Calu3 (cell line): ENCODE measurements at regions of chr3 and their contacts with region 1.

Region 1: DNA sequence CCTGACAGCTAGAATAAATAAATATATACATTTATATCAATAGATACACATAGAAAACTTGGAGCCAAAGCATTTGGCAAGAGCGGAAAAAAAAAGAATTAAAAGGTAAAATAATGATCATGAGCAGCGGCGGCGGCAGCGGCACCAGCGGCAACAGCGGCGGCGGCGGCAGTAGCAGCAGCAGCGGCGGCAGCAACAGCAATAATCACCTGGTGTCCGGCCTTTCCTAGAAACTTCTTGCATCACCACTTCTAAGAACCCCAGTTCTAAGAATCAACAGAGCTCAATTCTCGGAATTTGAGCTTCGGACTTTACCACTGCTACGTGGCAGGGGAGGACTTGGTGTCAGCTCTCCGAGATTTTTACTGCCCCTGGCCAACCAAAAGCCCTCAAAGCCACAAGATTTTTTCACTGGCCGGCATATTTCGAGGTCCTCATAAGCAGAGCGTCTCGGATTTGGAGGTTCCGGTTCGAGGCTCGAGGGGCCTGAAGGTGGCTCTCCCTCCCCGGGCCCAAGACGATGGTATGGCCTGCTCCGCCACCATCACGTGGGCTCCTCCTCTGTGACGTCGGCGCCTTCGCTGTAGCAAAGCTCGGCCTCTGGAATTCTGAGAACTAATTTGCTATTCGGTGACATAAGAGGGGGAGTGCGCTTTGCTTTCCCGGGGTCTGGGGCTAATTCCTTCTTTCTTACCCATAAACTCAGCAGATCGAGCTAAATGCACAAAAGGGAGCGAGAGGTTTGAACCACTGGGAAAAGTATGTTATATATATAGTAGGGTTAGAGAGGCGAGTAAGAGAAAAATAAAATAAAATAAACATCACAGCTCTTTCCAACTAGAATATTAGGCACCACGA is at the start of gene BCL6:
- DNase-seq: peak; percentile 93
- H3K4me3 Mint-ChIP-seq: peak within 1 kb of the TSS; percentile 83
- H3K27ac Mint-ChIP-seq: peak within 1 kb of the TSS; percentile 89
- H3K4me1 Mint-ChIP-seq: peaks cover 54% of the 10 kb centered on the region
- H3K27me3 Mint-ChIP-seq: no peaks in the 10 kb centered on the region
- CTCF ChIP-seq: no peak
- total RNA-seq, gene BCL6: 28.3 and 35.1 TPM in 2 replicates

Region 2: DNA sequence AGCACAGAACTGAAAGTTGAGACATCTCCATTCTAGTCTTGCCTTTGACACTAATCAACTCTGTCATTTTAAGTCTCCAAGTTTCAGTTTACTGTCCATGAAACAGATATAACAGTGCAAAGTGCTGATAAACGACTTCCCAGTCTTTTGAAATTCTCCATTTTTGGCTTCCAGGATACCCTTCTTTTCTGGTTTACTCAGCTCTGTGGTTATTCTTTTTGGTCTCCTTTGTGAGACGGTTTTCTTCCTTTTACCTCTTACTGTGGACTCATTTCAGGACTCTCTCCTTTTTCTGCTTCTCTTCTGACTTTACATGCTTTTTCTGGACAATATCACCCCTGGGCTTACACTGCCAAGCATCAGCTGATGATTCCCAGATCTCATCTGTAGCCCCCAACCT is 94.1 kb before region 1 on chr3:
- CTCF ChIA-PET with region 1: no interaction called
- intact Hi-C with region 1: no loop called
- DNase-seq: no peak
- H3K4me3 Mint-ChIP-seq: no peak overlapping the region
- H3K27ac Mint-ChIP-seq: no peak overlapping the region
- H3K4me1 Mint-ChIP-seq: no peaks in the 10 kb centered on the region
- H3K27me3 Mint-ChIP-seq: peaks cover 85% of the 10 kb centered on the region
- CTCF ChIP-seq: no peak

Region 3: DNA sequence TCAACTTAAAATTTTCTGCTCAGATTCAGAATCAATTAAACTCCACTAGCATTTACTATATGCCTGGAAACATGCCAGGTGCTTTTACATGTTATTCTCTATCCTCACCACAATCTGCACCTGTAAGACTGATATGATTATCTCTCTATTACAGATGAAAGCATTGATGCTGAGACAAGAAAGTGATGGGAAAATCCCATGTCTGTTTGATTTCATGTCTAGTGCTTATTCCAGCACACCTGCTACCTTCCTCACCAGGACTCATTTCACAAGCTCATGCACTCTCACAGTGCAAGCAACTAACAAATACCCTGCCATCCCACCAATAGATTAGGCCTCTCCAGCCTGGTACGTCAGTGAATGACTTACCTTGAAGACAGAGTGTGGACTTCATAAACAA is 24.8 kb after region 1 on chr3:
- CTCF ChIA-PET with region 1: no interaction called
- intact Hi-C with region 1: no loop called
- DNase-seq: no peak
- H3K4me3 Mint-ChIP-seq: no peak overlapping the region
- H3K27ac Mint-ChIP-seq: no peak overlapping the region
- H3K4me1 Mint-ChIP-seq: peaks cover 6% of the 10 kb centered on the region
- H3K27me3 Mint-ChIP-seq: no peaks in the 10 kb centered on the region
- CTCF ChIP-seq: no peak

Region 4: GRCh38 chr3:187974871-187975271 is 229.4 kb after region 1 on chr3:
- CTCF ChIA-PET with region 1: interaction called, 3 read pairs
- intact Hi-C with region 1: loop called (anchors 2 kb)
- DNase-seq: no peak
- H3K4me3 Mint-ChIP-seq: no peak overlapping the region
- H3K27ac Mint-ChIP-seq: no peak overlapping the region
- H3K4me1 Mint-ChIP-seq: peaks cover 44% of the 10 kb centered on the region
- H3K27me3 Mint-ChIP-seq: no peaks in the 10 kb centered on the region
- CTCF ChIP-seq: no peak

Region 5: DNA sequence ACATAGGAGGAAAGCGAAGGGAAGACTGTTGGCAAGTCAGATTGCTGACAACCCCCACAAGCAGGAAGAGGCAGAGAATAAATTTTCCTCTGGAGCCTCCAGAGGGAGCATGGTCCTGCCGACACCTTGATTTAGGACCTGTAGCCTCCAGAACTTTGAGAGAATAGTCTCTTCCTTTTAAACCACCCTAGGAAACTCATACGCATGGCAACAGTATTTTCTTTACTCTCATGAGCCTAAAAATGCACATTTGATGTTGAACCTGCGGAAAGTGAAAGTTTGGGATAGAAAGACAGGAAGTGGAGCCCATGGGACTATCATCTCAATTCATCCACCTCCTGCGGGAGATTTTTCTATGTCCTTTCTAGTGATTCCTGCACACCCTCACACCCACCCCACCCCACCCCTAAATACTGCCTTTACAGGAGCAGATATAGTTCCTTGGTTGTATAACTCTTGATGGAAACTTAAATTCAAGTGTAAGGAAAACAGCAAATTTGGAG is 291.8 kb after region 1 on chr3:
- CTCF ChIA-PET with region 1: interaction called, 3 read pairs
- intact Hi-C with region 1: loop called (anchors 10 kb)
- DNase-seq: peak; percentile 59
- H3K4me3 Mint-ChIP-seq: no peak overlapping the region
- H3K27ac Mint-ChIP-seq: no peak overlapping the region
- H3K4me1 Mint-ChIP-seq: peaks cover 29% of the 10 kb centered on the region
- H3K27me3 Mint-ChIP-seq: no peaks in the 10 kb centered on the region
- CTCF ChIP-seq: peak; percentile 65

Region 6: DNA sequence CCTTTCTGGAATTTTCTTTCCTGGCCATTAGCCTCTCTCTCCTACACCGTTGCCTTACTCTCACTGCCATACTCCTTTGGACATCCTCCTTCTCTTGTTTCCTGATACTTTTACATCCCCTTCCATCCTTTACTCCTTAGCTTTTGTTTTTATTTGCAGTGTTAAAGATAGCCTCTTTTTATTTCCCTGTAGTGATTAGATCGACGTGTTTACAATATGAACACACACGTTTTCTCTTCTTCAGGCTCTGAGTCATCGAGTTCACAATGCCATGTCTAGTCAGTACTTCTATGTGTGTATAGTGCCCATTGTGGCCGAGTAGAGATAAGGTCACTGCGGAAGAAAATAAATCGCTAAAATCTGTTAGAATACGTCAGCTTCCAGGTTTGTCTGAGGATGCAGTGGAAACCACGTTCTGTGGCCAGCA is 617.0 kb after region 1 on chr3:
- CTCF ChIA-PET with region 1: interaction called, 3 read pairs
- intact Hi-C with region 1: loop called (anchors 2 kb)
- DNase-seq: peak; percentile 66
- H3K4me3 Mint-ChIP-seq: peak overlapping the region; percentile 0
- H3K27ac Mint-ChIP-seq: peak overlapping the region; percentile 23
- H3K4me1 Mint-ChIP-seq: peaks cover 44% of the 10 kb centered on the region
- H3K27me3 Mint-ChIP-seq: no peaks in the 10 kb centered on the region
- CTCF ChIP-seq: no peak

Region 7: GRCh38 chr3:188568736-188569135 is 823.3 kb after region 1 on chr3:
- CTCF ChIA-PET with region 1: no interaction called
- intact Hi-C with region 1: loop called (anchors 10 kb)
- DNase-seq: no peak
- H3K4me3 Mint-ChIP-seq: no peak overlapping the region
- H3K27ac Mint-ChIP-seq: no peak overlapping the region
- H3K4me1 Mint-ChIP-seq: peaks cover 16% of the 10 kb centered on the region
- H3K27me3 Mint-ChIP-seq: no peaks in the 10 kb centered on the region
- CTCF ChIP-seq: no peak